Endothelial cell of umbilical vein (primary cell): ENCODE measurements at regions of chr1 and their contacts with region 1.

Region 1: DNA sequence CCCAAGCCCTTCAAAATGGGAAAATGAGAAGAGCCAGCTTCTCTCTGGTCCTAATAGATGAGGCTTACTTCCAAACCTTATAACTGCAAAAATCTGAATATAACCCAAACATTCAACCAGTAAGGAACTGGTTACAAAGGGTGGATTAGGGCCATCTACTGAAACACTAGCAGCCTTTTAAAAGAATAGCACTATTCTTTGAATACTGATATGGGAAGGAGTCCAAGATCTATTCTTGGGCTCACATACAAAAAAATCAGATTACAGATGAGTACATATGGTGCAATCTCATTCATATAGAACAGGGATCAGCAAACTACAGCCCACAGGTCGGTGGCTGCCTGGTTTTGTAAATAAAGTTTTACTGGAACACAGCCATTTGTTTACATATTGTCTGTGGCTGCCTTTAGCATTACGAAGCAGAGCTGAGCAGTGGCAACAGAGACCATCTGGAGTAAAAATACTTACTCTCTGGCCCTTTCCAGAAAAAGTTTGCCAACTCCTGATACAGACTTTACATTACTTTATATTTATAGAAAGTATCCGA is 167.7 kb downstream of the ZSCAN20 start:
- DNase-seq: no peak
- H3K4me3 ChIP-seq: no peak overlapping the region
- H3K27ac ChIP-seq: no peak overlapping the region
- H3K4me1 ChIP-seq: no peaks in the 10 kb centered on the region
- H3K27me3 ChIP-seq: no peaks in the 10 kb centered on the region
- CTCF ChIP-seq: no peak
- POLR2A ChIP-seq: no peak

Region 2: DNA sequence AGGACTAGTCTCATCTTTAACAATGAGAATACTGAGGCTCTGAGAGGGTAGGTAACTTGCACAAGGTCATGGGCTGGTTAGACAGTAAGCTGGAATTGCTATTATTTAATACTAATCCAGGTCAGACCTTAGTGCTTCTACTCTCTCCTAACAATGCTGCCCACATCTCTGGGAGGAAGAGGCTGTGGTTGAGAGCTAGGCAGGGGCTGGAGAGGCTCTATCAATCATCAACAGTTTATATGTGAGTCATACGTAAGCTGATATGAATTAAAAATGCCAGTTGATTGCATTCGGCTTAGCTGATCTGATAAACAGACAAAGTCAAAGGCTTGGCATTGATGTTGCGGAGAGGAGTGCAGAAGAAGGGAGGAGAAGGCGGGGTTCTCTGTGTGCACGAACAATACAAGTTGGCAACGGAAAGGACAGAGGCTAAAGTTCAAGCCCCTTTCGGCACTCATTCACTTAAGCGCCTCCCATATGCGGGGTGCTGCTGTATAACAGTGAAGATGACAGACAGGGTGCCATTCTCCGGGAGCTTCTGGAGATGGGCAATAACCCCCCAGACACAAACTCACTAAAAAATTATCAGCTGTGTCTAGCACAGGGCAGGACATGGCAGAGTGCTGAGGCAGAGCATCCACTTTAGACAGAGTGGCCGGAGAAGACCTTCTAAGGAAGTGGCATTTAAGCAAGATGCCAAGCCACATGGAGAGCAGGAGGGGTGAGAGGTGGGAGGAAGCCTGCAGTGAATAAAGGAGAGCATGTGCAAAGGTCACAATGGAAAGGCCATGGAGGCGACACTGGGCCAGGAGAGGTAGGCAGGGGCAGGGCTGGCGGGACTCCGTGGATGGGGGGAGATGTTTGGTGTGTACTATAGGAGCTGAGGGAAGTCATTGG is 27.4 kb after region 1 on chr1:
- CTCF ChIA-PET with region 1: no interaction called
- POLR2A ChIA-PET with region 1: no interaction called
- dilution Hi-C with region 1: no loop called
- intact Hi-C with region 1: no loop called
- DNase-seq: no peak
- H3K4me3 ChIP-seq: no peak overlapping the region
- H3K27ac ChIP-seq: no peak overlapping the region
- H3K4me1 ChIP-seq: no peaks in the 10 kb centered on the region
- H3K27me3 ChIP-seq: no peaks in the 10 kb centered on the region
- CTCF ChIP-seq: no peak
- POLR2A ChIP-seq: no peak

Region 3: GRCh38 chr1:33692206-33693188 is 52.3 kb after region 1 on chr1:
- CTCF ChIA-PET with region 1: no interaction called
- POLR2A ChIA-PET with region 1: no interaction called
- dilution Hi-C with region 1: no loop called
- intact Hi-C with region 1: no loop called
- DNase-seq: no peak
- H3K4me3 ChIP-seq: no peak overlapping the region
- H3K27ac ChIP-seq: no peak overlapping the region
- H3K4me1 ChIP-seq: no peaks in the 10 kb centered on the region
- H3K27me3 ChIP-seq: no peaks in the 10 kb centered on the region
- CTCF ChIP-seq: no peak
- POLR2A ChIP-seq: no peak

Region 4: DNA sequence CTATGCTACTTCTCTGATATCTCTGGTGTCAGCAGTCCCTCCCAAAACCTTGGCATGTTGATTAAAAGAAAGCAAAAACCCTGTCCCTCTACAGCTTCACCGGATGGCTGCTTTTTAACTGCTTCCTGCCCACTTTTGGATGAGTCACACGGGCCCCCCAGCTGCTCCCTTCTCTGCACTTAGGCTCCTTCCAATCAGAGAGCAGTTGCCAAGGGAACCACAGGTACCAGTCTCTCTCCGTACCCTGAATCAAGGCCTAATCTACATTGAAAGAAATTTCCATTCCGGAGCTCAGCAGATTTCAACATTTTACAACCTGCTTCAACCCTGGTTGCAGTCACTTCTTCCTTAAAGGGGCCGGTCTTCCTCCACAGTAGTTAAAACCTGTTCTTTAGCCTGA is 1044.1 kb after region 1 on chr1:
- CTCF ChIA-PET with region 1: no interaction called
- POLR2A ChIA-PET with region 1: no interaction called
- dilution Hi-C with region 1: no loop called
- intact Hi-C with region 1: no loop called
- DNase-seq: no peak
- H3K4me3 ChIP-seq: no peak overlapping the region
- H3K27ac ChIP-seq: no peak overlapping the region
- H3K4me1 ChIP-seq: no peaks in the 10 kb centered on the region
- H3K27me3 ChIP-seq: no peaks in the 10 kb centered on the region
- CTCF ChIP-seq: no peak
- POLR2A ChIP-seq: no peak

Region 5: GRCh38 chr1:34742667-34743270 is 1102.6 kb after region 1 on chr1:
- CTCF ChIA-PET with region 1: interaction called, 338 read pairs
- POLR2A ChIA-PET with region 1: no interaction called
- dilution Hi-C with region 1: no loop called
- intact Hi-C with region 1: no loop called
- DNase-seq: peak; percentile 61
- H3K4me3 ChIP-seq: no peak overlapping the region
- H3K27ac ChIP-seq: no peak overlapping the region
- H3K4me1 ChIP-seq: no peaks in the 10 kb centered on the region
- H3K27me3 ChIP-seq: peaks cover 2 to 3% of the 10 kb centered on the region in 2 experiments
- CTCF ChIP-seq: peak; percentile 93 to 99
- POLR2A ChIP-seq: no peak